GM23248 (cell line): ENCODE measurements at regions of chr20 and their contacts with region 1.

Region 1: DNA sequence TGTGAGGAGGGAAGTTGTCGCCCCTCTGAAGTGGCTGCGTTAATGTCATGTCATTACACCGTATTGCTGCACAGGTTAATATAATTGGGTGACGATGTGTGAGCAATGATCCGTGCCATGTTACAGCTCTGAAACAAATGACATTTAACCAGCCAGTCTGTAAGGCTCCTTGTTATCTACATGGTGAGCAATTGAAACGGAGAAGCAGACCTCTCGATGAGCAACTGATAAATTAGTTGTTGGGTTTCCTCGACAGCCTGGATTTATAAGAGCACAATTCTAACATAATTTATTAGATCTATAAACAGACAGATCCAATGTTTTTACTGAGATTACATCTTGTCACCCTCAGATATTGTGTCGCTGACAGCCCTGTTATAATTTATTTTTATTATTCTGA is 49.9 kb upstream of the MAFB start:
- DNase-seq: no peak
- H3K4me3 ChIP-seq: no peak overlapping the region
- H3K27ac ChIP-seq: no peak overlapping the region
- H3K4me1 ChIP-seq: no peaks in the 10 kb centered on the region
- H3K27me3 ChIP-seq: peaks cover 9% of the 10 kb centered on the region

Region 2: DNA sequence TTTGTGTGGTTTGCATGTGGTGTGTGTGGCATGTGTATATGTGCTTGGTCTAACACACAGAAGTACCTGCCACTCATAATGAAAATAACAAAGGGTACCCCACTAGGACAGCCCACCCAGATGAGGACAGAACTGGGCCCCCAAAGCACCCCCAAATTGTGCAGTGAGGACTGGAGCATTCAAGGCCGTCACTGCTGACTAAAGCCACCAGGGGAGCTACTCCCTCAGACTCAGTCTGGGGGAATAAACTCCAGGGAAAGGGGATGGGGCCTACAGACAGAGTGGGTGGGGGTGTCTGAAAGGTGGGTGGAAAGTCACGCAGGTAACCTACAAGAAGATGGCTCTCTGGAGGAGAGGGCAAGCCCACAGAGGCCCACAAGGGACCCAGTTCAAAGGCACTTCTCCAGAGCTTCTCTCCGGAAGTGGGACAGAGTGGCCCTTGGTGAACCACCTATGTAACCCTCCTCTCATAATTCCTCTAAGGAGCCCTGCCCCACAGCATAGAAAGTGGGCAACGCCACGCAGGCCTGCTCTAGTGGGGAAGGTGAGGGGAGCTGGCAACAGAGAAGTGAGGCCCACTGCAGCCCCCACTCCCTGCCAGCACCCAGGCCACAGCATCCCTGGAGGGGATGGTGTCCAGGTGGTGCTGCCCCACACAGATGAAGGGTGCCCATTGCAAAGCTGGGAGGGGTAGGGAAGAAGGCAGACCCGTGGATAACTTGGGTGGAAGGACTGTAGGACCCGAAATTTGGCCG is 72.9 kb after region 1 on chr20:
- in situ Hi-C with region 1: no loop called
- DNase-seq: no peak
- H3K4me3 ChIP-seq: no peak overlapping the region
- H3K27ac ChIP-seq: no peak overlapping the region
- H3K4me1 ChIP-seq: no peaks in the 10 kb centered on the region
- H3K27me3 ChIP-seq: 0 out of 2 replicates have a peak, but pooled peaks cover 6% of the 10 kb centered on the region

Region 3: GRCh38 chr20:40938020-40938419 is 199.0 kb after region 1 on chr20:
- in situ Hi-C with region 1: loop called (anchors 10 kb)
- DNase-seq: no peak
- H3K4me3 ChIP-seq: no peak overlapping the region
- H3K27ac ChIP-seq: no peak overlapping the region
- H3K4me1 ChIP-seq: no peaks in the 10 kb centered on the region
- H3K27me3 ChIP-seq: no peaks in the 10 kb centered on the region